ENCODE measurements at regions of chr15 and their contacts with region 1.

Region 1: GRCh38 chr15:57854531-57854930 is 148.0 kb downstream of the POLR2M start:
- DNase-seq: no peak
- ATAC-seq: no peak
- H3K4me3 ChIP-seq: no peak overlapping the region
- H3K27ac ChIP-seq: no peak overlapping the region
- H3K4me1 ChIP-seq: no peaks in the 10 kb centered on the region
- H3K27me3 ChIP-seq: peaks cover 0 to 9% (median 0%) of the 10 kb centered on the region in 3 donors
- CTCF ChIP-seq: no peak

Region 2: GRCh38 chr15:57387564-57388076 is 466.9 kb before region 1 on chr15:
- intact Hi-C with region 1: loop called in 1 of 2 experiments (anchors 5 kb)
- DNase-seq: no peak
- ATAC-seq: no peak
- H3K4me3 ChIP-seq: no peak overlapping the region
- H3K27ac ChIP-seq: no peak overlapping the region
- H3K4me1 ChIP-seq: no peaks in the 10 kb centered on the region
- H3K27me3 ChIP-seq: no peaks in the 10 kb centered on the region
- CTCF ChIP-seq: no peak

Region 3: DNA sequence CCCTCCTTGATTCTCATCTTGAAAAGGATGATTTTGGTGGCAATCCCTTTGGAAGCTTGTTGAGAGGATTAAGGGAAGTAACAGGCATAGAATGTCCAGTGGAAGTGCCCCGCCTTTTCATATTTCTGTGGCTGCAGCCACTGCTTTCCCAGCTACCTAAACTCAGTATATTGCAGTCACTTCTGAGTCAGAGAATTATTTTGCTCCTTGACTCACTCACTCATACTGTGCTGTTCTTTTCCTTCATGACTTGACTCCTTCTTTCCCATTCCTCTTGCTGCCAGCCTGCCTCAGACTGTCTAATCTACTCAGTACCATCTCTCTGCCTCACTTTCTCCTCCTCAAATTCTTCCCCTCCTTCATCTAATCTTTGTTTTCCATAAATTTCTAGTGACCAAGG is 174.5 kb before region 1 on chr15:
- intact Hi-C with region 1: no loop called
- DNase-seq: no peak
- ATAC-seq: peak; percentile 66 to 79 (median 77)
- H3K4me3 ChIP-seq: no peak overlapping the region
- H3K27ac ChIP-seq: no peak overlapping the region
- H3K4me1 ChIP-seq: no peaks in the 10 kb centered on the region
- H3K27me3 ChIP-seq: no peaks in the 10 kb centered on the region
- CTCF ChIP-seq: no peak

Region 4: DNA sequence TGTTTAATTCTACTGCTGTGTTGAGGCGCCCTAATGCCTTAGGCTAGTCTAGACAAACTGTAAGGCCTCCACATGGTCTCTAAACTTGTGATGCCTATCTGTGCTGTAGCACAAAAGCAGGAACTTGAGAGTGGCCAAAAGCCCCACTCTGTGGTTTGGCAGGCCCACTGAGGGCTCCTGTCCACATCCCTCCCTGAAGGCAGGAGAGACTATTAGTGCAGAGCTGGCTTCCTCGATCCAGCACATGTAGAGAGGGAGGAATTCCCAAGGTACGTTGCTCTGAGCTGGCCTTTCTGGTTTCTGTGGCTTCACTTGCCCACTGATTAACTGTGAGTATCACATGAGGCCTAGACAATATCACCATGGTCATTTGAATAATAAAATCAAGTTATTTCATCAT is 57.4 kb before region 1 on chr15:
- intact Hi-C with region 1: loop called in 1 of 2 experiments (anchors 5 kb)
- DNase-seq: no peak
- ATAC-seq: peak in 1 of 4 donors; percentile 44
- H3K4me3 ChIP-seq: no peak overlapping the region
- H3K27ac ChIP-seq: no peak overlapping the region
- H3K4me1 ChIP-seq: no peaks in the 10 kb centered on the region
- H3K27me3 ChIP-seq: peaks cover 0 to 4% (median 0%) of the 10 kb centered on the region in 3 donors
- CTCF ChIP-seq: no peak